Heart right ventricle (tissue), 16 donors: ENCODE measurements at regions of chr2 and their contacts with region 1.

Region 1: GRCh38 chr2:222860740-222861410 is at the start of gene ACSL3:
- DNase-seq: peak; percentile 97 to 98
- ATAC-seq: peak; percentile 96 to 99 (median 97)
- H3K4me3 ChIP-seq: peak within 1 kb of the TSS; percentile 76 to 100 (median 90)
- H3K27ac ChIP-seq: peak within 1 kb of the TSS; percentile 95 to 99 (median 98)
- H3K4me1 ChIP-seq: peaks cover 16 to 57% (median 54%) of the 10 kb centered on the region in 9 donors
- H3K27me3 ChIP-seq: no peaks in the 10 kb centered on the region
- CTCF ChIP-seq: peak in 4 of 9 donors; percentile 8 to 32 (median 18)
- total RNA-seq, gene ACSL3: 37.9 to 67.2 (median 54.8) TPM

Region 2: DNA sequence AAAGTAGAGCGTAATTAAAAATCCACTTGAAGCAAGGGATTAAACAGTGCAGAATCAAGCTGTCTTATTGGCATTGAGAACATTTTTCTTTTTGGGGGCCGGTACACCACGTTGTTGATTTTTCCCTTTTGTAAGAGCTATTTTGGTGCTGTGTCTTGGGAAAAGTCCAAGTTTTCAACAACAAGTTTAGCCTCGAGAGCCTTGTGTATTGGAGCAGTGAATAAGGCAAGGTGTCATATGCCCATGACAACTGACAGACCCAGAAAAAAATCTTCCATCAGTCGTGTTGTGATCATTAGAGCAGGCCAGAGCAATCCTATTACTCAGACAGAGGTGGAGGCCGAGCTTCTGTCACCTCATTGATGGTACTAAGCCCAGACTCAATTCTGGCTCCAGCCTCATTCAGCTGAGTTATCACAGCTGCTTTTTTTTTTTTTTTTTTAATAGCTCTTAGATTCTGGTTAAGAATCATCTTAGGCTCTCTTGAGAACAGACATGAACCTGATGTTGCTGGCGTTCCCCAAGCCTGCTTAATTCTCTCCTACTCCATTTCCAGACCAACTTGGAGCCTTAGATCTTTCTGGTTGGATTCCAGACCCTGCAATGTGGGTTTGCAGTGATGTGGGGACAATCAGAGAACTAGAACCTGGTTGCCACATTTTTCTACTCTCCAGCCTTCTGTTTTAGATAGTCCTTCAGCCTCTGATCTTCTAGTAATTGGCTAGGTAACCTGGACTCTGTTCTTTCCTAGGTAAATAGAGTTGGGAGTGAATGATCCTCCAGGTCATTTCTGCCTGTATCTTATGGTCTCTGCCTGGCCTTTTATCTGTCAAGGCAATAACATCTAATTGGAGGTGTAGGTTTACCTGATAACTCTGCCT is 146.3 kb before region 1 on chr2:
- intact Hi-C with region 1: loop called in 9 of 10 experiments (anchors 2 to 5 kb)
- DNase-seq: peak in 1 of 2 donors; percentile 63
- ATAC-seq: peak; percentile 85 to 95 (median 90)
- H3K4me3 ChIP-seq: no peak overlapping the region
- H3K27ac ChIP-seq: peak overlapping the region; percentile 15 to 88 (median 66)
- H3K4me1 ChIP-seq: peaks cover 7 to 27% (median 18%) of the 10 kb centered on the region in 9 donors
- H3K27me3 ChIP-seq: no peaks in the 10 kb centered on the region
- CTCF ChIP-seq: no peak

Region 3: GRCh38 chr2:222792001-222792611 is 68.8 kb before region 1 on chr2:
- intact Hi-C with region 1: loop called in 7 of 10 experiments (anchors 2 to 5 kb)
- DNase-seq: peak; percentile 37 to 62
- ATAC-seq: peak; percentile 78 to 96 (median 88)
- H3K4me3 ChIP-seq: peak overlapping the region in 1 of 10 donors; percentile 11
- H3K27ac ChIP-seq: peak overlapping the region; percentile 68 to 90 (median 78)
- H3K4me1 ChIP-seq: peaks cover 4 to 69% (median 55%) of the 10 kb centered on the region in 9 donors
- H3K27me3 ChIP-seq: no peaks in the 10 kb centered on the region
- CTCF ChIP-seq: no peak

Region 4: GRCh38 chr2:222797261-222797660 is 63.6 kb before region 1 on chr2:
- intact Hi-C with region 1: loop called in 7 of 10 experiments (anchors 2 to 5 kb)
- DNase-seq: no peak
- ATAC-seq: peak in 4 of 8 donors; percentile 22 to 51 (median 39)
- H3K4me3 ChIP-seq: no peak overlapping the region
- H3K27ac ChIP-seq: peak overlapping the region in 4 of 10 donors; percentile 37 to 60 (median 49)
- H3K4me1 ChIP-seq: peaks cover 6 to 48% (median 33%) of the 10 kb centered on the region in 9 donors
- H3K27me3 ChIP-seq: no peaks in the 10 kb centered on the region
- CTCF ChIP-seq: peak in 7 of 9 donors; percentile 40 to 63 (median 48)

Region 5: GRCh38 chr2:222912117-222912516 is 51.2 kb after region 1 on chr2:
- intact Hi-C with region 1: loop called in 2 of 10 experiments (anchors 2 to 5 kb)
- DNase-seq: no peak
- ATAC-seq: peak in 5 of 8 donors; percentile 17 to 72 (median 43)
- H3K4me3 ChIP-seq: no peak overlapping the region
- H3K27ac ChIP-seq: peak overlapping the region in 1 of 10 donors; percentile 48
- H3K4me1 ChIP-seq: peaks cover under 1 to 44% (median 28%) of the 10 kb centered on the region in 9 donors
- H3K27me3 ChIP-seq: no peaks in the 10 kb centered on the region
- CTCF ChIP-seq: no peak